GM23248 (cell line): ENCODE measurements at regions of chr5 and their contacts with region 1.

Region 1: DNA sequence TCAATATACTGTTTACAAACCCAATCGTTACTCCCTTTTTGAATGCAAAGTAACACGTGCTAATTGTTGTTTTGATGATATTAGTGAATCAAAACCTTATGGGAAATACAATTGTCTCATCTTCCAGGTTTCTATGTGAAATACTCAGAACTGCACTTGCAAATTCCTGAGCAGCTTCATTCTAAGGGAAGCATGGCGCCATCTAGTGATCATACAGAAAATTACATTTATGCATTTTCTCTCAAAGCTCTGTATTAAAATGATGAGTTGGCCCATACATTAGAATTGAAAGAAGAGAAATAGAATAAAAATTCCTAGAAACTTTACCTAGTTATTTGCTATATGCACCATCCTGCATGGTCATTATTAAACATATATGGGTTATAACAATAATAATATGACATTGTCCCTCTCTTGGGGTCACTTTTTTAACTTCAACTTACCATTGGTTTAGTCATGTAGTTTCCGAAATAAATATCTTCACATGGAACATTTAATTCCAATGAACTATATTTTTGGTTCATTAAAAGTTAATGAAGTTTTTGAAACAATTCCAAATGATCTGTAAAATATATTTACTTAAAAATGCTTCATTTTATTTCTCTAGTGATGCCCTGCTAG is 220.0 kb downstream of the PDE4D start:
- DNase-seq: peak; percentile 69
- H3K4me3 ChIP-seq: no peak overlapping the region
- H3K27ac ChIP-seq: no peak overlapping the region
- H3K4me1 ChIP-seq: no peaks in the 10 kb centered on the region
- H3K27me3 ChIP-seq: no peaks in the 10 kb centered on the region

Region 2: DNA sequence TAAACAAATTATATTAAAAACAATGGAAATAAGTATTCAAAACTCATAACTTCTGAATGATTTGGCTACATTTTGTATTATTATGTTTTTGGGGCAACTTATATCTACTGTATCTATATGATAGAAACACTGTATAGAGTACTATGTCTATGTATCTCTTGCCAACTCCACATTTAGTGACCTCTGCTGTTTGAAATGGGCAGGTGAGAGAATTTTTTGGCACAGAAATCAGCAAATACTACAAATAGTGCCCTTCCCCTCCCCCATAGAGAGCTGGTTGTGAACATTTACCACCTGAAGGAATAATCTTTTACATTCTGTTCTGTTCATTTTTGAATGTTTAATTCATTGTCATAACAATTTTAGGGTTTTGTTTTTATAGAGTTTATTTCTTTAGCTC is 325.4 kb before region 1 on chr5:
- in situ Hi-C with region 1: no loop called
- DNase-seq: no peak
- H3K4me3 ChIP-seq: no peak overlapping the region
- H3K27ac ChIP-seq: no peak overlapping the region
- H3K4me1 ChIP-seq: no peaks in the 10 kb centered on the region
- H3K27me3 ChIP-seq: peaks cover 11% of the 10 kb centered on the region; the same call in 1 of the 2 replicates

Region 3: GRCh38 chr5:59380350-59380951 is 293.1 kb before region 1 on chr5:
- in situ Hi-C with region 1: loop called (anchors 10 kb)
- DNase-seq: peak; percentile 73
- H3K4me3 ChIP-seq: no peak overlapping the region
- H3K27ac ChIP-seq: no peak overlapping the region
- H3K4me1 ChIP-seq: no peaks in the 10 kb centered on the region
- H3K27me3 ChIP-seq: peaks cover 25% of the 10 kb centered on the region

Region 4: DNA sequence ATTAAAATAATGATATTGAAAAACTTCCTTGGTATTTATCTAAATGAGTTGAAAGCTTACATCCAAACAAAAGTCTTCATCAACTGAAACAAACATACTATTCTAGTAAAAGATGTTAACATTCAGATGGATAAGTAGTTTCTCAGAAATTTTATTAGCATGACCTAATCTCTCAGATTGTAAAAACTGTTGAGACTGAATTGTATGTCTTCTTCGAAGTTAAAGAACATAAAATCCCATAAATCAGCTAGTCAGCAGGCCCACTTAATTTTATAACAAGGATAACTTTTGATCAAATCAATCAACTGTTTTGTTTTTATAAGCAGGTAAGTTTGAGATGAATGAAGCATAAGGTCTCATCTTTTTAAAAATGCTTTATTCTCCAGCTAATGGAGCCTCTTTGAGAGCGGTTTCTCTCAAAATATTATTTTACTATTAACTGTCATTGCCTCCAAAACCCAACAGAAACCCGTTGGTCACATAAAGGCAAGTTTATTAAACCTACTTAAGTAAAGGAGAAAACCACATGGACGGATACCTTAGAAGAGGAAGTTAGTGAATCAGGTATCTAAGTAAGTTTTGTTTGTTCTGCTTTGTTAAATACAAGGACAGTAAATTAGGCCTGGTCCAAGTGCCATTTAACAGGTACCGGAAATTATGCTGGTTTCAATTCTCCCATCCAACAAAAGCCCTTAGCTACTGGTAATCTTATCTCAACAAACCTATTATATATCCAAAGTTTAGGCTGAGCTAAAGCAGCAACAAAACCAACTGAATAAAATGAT is 237.0 kb before region 1 on chr5:
- in situ Hi-C with region 1: no loop called
- DNase-seq: no peak
- H3K4me3 ChIP-seq: no peak overlapping the region
- H3K27ac ChIP-seq: no peak overlapping the region
- H3K4me1 ChIP-seq: no peaks in the 10 kb centered on the region
- H3K27me3 ChIP-seq: 0 out of 2 replicates have a peak, but pooled peaks cover 5% of the 10 kb centered on the region